Heart right ventricle (tissue), 16 donors: ENCODE measurements at regions of chr17 and their contacts with region 1.

Region 1: GRCh38 chr17:72266112-72266852 is 145.5 kb downstream of the SOX9 start:
- DNase-seq: no peak
- ATAC-seq: no peak
- H3K4me3 ChIP-seq: no peak overlapping the region
- H3K27ac ChIP-seq: no peak overlapping the region
- H3K4me1 ChIP-seq: peaks cover 0 to 10% (median 0%) of the 10 kb centered on the region in 9 donors
- H3K27me3 ChIP-seq: peaks cover 0 to 26% (median 5%) of the 10 kb centered on the region in 7 donors
- CTCF ChIP-seq: no peak

Region 2: DNA sequence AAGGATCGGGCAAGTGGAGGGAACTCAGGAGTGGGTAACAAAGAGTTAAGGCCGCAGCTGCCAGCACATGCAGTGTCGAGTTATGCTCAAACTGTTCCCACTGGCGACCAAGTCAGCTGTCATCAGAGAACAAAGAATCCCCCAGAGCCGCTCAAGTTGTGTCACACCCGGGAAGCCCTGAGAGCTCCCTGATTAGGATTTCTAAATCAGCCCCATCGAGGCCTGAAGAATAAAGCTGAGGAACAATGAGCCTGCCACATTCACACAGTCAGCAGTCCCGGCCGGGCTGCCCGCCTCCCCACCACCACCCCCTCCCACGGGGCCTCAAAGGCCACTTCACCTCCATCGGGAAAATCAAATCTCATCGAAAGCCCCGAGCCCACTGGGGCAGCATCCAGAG is 60.9 kb before region 1 on chr17:
- intact Hi-C with region 1: loop called in 1 of 10 experiments (anchors 10 kb)
- DNase-seq: no peak
- ATAC-seq: peak in 2 of 8 donors; percentile 14 to 18
- H3K4me3 ChIP-seq: no peak overlapping the region
- H3K27ac ChIP-seq: no peak overlapping the region
- H3K4me1 ChIP-seq: peaks cover 0 to 10% (median 0%) of the 10 kb centered on the region in 9 donors
- H3K27me3 ChIP-seq: peaks cover 0 to 31% (median 25%) of the 10 kb centered on the region in 7 donors
- CTCF ChIP-seq: no peak

Region 3: DNA sequence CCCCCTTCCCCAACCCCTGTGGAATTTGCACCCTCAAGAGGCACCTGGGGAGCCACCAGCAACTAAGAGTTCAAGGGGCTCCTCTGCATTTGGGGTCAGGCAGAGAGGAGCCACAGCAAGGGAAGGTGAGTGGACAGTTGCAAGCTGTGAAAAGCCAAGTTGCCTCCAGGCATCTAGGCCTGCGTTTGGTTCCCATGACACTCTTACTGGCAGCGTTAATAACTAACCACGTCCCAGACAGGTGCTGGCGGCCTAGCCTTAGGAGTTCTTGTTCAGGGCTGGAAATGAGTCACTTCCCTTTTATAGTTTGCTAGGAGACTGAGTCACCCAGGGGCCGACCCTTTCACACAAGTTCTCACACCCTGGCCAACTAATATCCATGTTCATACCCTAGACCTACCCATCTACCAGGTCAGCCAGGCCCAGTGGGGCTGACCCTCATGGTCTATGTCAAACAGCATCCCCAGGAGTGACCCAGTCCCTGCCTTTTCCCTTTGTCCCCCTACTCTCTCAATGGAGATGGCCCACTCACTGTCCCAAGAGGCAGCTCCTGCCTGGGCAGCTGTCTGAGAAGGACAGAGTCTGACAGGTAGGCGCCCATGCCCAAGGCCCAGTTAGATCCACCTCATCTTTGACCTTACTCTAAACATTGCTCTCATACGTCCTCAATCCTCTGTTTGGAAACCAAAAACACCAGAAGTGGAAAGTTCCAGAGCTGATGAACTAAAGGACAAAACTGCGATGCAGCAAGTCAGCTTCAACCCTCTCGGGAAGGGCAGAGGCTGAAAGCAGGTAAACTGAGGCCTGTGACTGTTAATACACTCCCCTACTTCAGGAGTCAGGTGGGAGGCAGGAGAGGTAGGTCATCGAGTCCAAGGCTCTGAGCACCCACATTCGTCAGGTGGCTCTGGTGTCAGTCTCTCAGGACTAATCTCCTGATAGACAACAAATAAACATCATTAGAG is 155.1 kb after region 1 on chr17:
- intact Hi-C with region 1: loop called in 1 of 10 experiments (anchors 10 kb)
- DNase-seq: no peak
- ATAC-seq: peak in 6 of 8 donors; percentile 33 to 82 (median 50)
- H3K4me3 ChIP-seq: no peak overlapping the region
- H3K27ac ChIP-seq: no peak overlapping the region
- H3K4me1 ChIP-seq: peaks cover 0 to 28% (median 0%) of the 10 kb centered on the region in 9 donors
- H3K27me3 ChIP-seq: no peaks in the 10 kb centered on the region
- CTCF ChIP-seq: no peak